ENCODE measurements at regions of chr12 and their contacts with region 1.

Region 1: DNA sequence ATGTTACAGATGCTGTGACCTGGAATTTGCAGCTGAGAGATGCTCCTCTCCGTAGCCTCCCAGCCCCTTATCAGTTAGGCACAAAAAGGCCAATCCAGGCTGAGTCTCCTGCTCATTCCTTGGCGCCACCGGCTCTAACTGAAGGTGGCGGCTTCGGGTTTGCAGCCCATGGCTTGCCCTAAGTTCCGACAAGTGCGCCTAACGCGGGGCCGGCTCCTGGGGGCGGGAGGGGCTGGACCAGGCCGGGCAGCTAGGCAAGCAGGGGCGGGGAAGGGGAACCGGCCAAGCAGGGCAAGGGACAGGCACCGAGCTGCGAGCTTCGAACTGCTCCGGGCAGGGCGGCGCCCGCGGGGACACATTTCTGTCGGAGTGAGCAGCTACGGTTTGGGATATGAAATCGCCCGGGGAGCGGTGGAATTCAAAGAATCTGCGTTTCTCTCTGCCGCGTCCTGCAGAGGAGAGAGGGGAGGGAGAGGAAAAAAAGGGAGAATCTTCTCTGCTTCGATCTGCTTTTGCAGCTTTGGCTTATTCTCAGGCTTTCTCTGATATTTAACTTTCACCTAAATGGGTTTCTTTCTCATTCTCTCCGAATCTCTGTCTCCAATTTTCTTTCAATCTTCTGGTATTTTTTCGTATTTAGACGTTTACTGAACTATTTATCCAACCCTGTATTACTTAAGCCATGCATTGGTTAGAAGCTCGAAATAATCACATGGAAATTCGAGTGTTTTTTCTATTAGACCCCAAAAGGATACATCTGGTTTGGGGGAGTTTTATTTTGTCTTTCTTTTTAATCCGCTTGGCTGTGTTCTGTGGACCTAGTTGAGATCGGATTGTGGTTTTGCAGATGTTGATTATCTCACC is 1.6 kb upstream of the HOXC12 start:
- DNase-seq: no peak
- ATAC-seq: no peak
- H3K4me3 ChIP-seq: no peak overlapping the region
- H3K4me3 Mint-ChIP-seq: no peak overlapping the region
- H3K27ac ChIP-seq: no peak overlapping the region
- H3K27ac Mint-ChIP-seq: no peak overlapping the region
- H3K4me1 ChIP-seq: peaks cover 39% of the 10 kb centered on the region
- H3K4me1 Mint-ChIP-seq: peaks cover 33% of the 10 kb centered on the region
- H3K27me3 ChIP-seq: peaks cover 89 to 94% of the 10 kb centered on the region in 2 experiments
- H3K27me3 Mint-ChIP-seq: peaks cover 82% of the 10 kb centered on the region
- CTCF ChIP-seq: no peak

Region 2: GRCh38 chr12:53973093-53974042 is 20.3 kb after region 1 on chr12 and contains the start of gene HOXC11:
- CTCF ChIA-PET with region 1: no interaction called
- POLR2A ChIA-PET with region 1: no interaction called
- intact Hi-C with region 1: loop called in 1 of 2 experiments (anchors 2 kb)
- DNase-seq: no peak
- ATAC-seq: peak; percentile 13
- H3K4me3 ChIP-seq: no peak within 1 kb of the TSS
- H3K4me3 Mint-ChIP-seq: peak within 1 kb of the TSS; percentile 38
- H3K27ac ChIP-seq: no peak within 1 kb of the TSS
- H3K27ac Mint-ChIP-seq: peak within 1 kb of the TSS; percentile 35
- H3K4me1 ChIP-seq: peaks cover 32% of the 10 kb centered on the region
- H3K4me1 Mint-ChIP-seq: peaks cover 24% of the 10 kb centered on the region
- H3K27me3 ChIP-seq: peaks cover 65 to 89% of the 10 kb centered on the region in 2 experiments
- H3K27me3 Mint-ChIP-seq: peaks cover 89% of the 10 kb centered on the region
- CTCF ChIP-seq: no peak
- total RNA-seq, gene HOXC11: not detected

Region 3: GRCh38 chr12:54000774-54001114 is 47.6 kb after region 1 on chr12:
- CTCF ChIA-PET with region 1: no interaction called
- POLR2A ChIA-PET with region 1: no interaction called
- intact Hi-C with region 1: no loop called
- DNase-seq: no peak
- ATAC-seq: no peak
- H3K4me3 ChIP-seq: no peak overlapping the region
- H3K4me3 Mint-ChIP-seq: peak overlapping the region; percentile 11
- H3K27ac ChIP-seq: no peak overlapping the region
- H3K27ac Mint-ChIP-seq: no peak overlapping the region
- H3K4me1 ChIP-seq: peaks cover 32% of the 10 kb centered on the region
- H3K4me1 Mint-ChIP-seq: peaks cover 26% of the 10 kb centered on the region
- H3K27me3 ChIP-seq: peaks cover 82 to 87% of the 10 kb centered on the region in 2 experiments
- H3K27me3 Mint-ChIP-seq: peaks cover 87% of the 10 kb centered on the region
- CTCF ChIP-seq: no peak